ENCODE measurements at regions of chr5 and their contacts with region 1.

Region 1: GRCh38 chr5:57499262-57500050 is 16.8 kb upstream of the ACTBL2 start:
- DNase-seq: peak in 1 of 2 donors; percentile 31
- ATAC-seq: peak in 7 of 8 donors; percentile 50 to 82 (median 68)
- H3K4me3 ChIP-seq: peak overlapping the region in 7 of 10 donors; percentile 8 to 41 (median 31)
- H3K27ac ChIP-seq: peak overlapping the region in 4 of 10 donors; percentile 0 to 70 (median 33)
- H3K4me1 ChIP-seq: peaks cover 0 to 49% (median 33%) of the 10 kb centered on the region in 9 donors
- H3K27me3 ChIP-seq: no peaks in the 10 kb centered on the region
- CTCF ChIP-seq: peak; percentile 59 to 87 (median 76)

Region 2: GRCh38 chr5:57650360-57651069 is 151.1 kb after region 1 on chr5:
- intact Hi-C with region 1: loop called in 2 of 10 experiments (anchors 10 kb)
- DNase-seq: no peak
- ATAC-seq: peak in 4 of 8 donors; percentile 37 to 58 (median 52)
- H3K4me3 ChIP-seq: no peak overlapping the region
- H3K27ac ChIP-seq: no peak overlapping the region
- H3K4me1 ChIP-seq: peaks cover 0 to 13% (median 0%) of the 10 kb centered on the region in 9 donors
- H3K27me3 ChIP-seq: no peaks in the 10 kb centered on the region
- CTCF ChIP-seq: peak; percentile 30 to 66 (median 57)

Region 3: GRCh38 chr5:57684299-57684702 is 184.8 kb after region 1 on chr5:
- intact Hi-C with region 1: loop called in 1 of 10 experiments (anchors 10 kb)
- DNase-seq: no peak
- ATAC-seq: no peak
- H3K4me3 ChIP-seq: no peak overlapping the region
- H3K27ac ChIP-seq: no peak overlapping the region
- H3K4me1 ChIP-seq: no peaks in the 10 kb centered on the region
- H3K27me3 ChIP-seq: no peaks in the 10 kb centered on the region
- CTCF ChIP-seq: no peak

Region 4: DNA sequence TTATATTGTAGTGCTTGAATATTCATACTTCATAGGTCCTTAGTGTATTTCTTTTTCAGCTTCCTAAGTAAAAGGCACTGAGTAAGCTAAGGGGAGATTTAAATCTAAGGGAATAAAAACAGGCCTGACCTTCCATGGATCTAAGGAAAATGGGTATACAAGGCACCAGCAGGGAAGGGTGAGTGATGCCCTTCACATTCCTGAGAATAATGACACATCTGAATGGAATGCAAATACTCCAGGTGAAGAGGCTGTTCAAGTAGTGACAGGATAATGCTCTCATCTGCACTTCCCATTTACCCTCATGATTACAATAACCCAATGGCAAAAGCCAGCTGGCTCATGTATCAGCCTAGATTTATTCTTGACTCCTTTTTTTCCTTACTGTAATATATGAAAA is 199.3 kb after region 1 on chr5:
- intact Hi-C with region 1: loop called in 2 of 10 experiments (anchors 5 to 10 kb)
- DNase-seq: no peak
- ATAC-seq: no peak
- H3K4me3 ChIP-seq: no peak overlapping the region
- H3K27ac ChIP-seq: peak overlapping the region in 9 of 10 donors; percentile 57 to 89 (median 78)
- H3K4me1 ChIP-seq: peaks cover 5 to 59% (median 37%) of the 10 kb centered on the region in 9 donors
- H3K27me3 ChIP-seq: no peaks in the 10 kb centered on the region
- CTCF ChIP-seq: no peak

Region 5: DNA sequence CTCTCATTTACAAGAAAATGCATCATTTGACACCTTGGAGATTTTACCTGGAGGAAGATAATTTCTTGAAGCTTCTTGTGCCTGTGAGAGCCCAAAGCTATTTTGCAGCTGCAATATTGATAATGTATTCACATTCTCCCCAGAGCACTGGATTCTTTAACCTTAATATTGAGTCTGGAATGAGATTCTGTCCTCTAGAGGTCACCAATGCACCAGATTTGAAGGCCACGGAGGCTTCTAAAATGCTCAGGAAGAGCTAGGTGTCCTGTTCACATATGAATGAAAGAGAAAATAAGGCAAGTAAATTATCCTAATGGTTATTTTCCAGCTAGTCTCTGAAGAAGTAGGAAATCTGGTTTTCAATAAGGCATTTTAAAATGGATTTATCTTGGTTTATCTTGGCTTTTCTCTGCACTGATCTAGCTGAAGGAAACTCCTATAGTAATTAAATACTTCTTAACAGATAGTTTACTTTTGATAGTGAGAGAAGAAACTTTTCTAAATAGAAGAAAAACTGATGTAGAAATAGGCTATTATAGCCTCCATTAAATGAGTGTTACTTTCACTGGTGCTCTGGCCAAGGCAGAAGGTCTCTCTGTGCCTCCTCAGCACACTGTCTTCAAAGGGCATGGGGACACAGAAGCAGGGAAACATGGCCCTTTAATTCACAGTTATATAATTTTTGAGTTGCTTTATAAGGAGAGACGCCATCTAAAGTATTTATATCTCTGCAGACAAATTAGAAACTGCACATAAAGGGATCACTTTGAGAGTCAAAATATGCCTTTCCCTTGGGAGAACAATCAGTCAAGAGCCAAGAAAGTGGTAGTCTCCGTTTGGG is 280.1 kb after region 1 on chr5:
- intact Hi-C with region 1: loop called in 7 of 10 experiments (anchors 2 to 10 kb)
- DNase-seq: peak in 1 of 2 donors; percentile 56
- ATAC-seq: peak; percentile 71 to 89 (median 83)
- H3K4me3 ChIP-seq: peak overlapping the region in 3 of 10 donors; percentile 2 to 11 (median 8)
- H3K27ac ChIP-seq: peak overlapping the region in 7 of 10 donors; percentile 35 to 73 (median 64)
- H3K4me1 ChIP-seq: peaks cover 0 to 50% (median 13%) of the 10 kb centered on the region in 9 donors
- H3K27me3 ChIP-seq: no peaks in the 10 kb centered on the region
- CTCF ChIP-seq: peak; percentile 23 to 86 (median 69)

Region 6: GRCh38 chr5:57791875-57792274 is 292.4 kb after region 1 on chr5:
- intact Hi-C with region 1: no loop called
- DNase-seq: no peak
- ATAC-seq: no peak
- H3K4me3 ChIP-seq: no peak overlapping the region
- H3K27ac ChIP-seq: no peak overlapping the region
- H3K4me1 ChIP-seq: peaks cover 0 to 8% (median 0%) of the 10 kb centered on the region in 9 donors
- H3K27me3 ChIP-seq: no peaks in the 10 kb centered on the region
- CTCF ChIP-seq: no peak